ENCODE measurements at regions of chr19 and their contacts with region 1.

Region 1: GRCh38 chr19:45994989-45995714 is at the start of gene CCDC61:
- DNase-seq: peak; percentile 100
- H3K4me3 Mint-ChIP-seq: no peak within 1 kb of the TSS
- H3K27ac Mint-ChIP-seq: no peak within 1 kb of the TSS
- H3K4me1 Mint-ChIP-seq: peaks cover 33% of the 10 kb centered on the region
- H3K27me3 Mint-ChIP-seq: peaks cover 8% of the 10 kb centered on the region
- CTCF ChIP-seq: no peak
- total RNA-seq, gene CCDC61: 17.5 and 18.9 TPM in 2 replicates

Region 2: GRCh38 chr19:45862564-45863334 is 132.4 kb before region 1 on chr19 and contains the start of gene SYMPK:
- CTCF ChIA-PET with region 1: interaction called, 3 read pairs
- POLR2A ChIA-PET with region 1: interaction called, 13 read pairs
- intact Hi-C with region 1: no loop called
- DNase-seq: peak; percentile 99
- H3K4me3 Mint-ChIP-seq: peak within 1 kb of the TSS; percentile 90
- H3K27ac Mint-ChIP-seq: peak within 1 kb of the TSS; percentile 86
- H3K4me1 Mint-ChIP-seq: peaks cover 10% of the 10 kb centered on the region
- H3K27me3 Mint-ChIP-seq: peaks cover 50% of the 10 kb centered on the region
- CTCF ChIP-seq: no peak
- total RNA-seq, gene SYMPK: 77.4 and 86.2 TPM in 2 replicates

Region 3: DNA sequence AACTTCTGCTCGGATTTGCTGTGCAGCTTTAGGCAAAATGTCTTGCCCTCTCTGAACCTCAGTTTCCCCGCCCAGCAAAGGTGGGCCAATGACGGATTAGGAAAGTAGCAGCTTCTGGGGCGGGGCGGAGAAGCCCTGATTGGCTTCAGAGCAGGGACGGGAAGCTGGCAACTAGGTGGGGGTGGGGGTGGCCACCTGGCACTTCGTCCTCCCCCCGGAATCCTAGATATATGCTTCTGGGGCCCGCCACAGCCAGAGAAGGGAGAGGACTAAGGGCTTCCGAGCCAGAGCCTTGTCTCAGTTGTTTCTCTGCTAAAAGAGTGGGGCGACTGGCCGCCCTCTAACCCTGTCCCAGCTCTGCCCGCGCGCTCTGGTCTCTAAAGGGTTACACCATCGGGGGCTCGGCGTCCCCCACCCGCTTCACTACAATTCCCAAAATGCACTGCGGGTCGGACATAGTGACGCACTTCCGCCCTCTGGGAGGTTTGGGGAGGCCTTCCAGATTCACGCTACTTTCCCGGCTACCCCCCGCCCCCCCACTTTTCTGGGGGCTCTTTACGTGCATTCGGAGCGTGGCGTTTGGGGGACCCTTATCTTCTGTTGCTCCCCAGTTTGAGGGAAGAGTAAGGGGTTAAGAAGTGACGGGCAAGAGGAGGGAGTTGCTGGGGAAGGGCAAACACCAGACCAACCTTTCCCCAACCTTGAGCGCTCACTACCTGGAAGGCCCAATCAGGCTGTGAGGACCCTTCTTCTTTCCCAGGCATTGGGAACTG is 108.5 kb before region 1 on chr19:
- CTCF ChIA-PET with region 1: no interaction called
- POLR2A ChIA-PET with region 1: interaction called, 22 read pairs
- intact Hi-C with region 1: loop called (anchors 10 kb)
- DNase-seq: peak; percentile 97
- H3K4me3 Mint-ChIP-seq: peak overlapping the region; percentile 97
- H3K27ac Mint-ChIP-seq: peak overlapping the region; percentile 98
- H3K4me1 Mint-ChIP-seq: peaks cover 10% of the 10 kb centered on the region
- H3K27me3 Mint-ChIP-seq: no peaks in the 10 kb centered on the region
- CTCF ChIP-seq: no peak

Region 4: DNA sequence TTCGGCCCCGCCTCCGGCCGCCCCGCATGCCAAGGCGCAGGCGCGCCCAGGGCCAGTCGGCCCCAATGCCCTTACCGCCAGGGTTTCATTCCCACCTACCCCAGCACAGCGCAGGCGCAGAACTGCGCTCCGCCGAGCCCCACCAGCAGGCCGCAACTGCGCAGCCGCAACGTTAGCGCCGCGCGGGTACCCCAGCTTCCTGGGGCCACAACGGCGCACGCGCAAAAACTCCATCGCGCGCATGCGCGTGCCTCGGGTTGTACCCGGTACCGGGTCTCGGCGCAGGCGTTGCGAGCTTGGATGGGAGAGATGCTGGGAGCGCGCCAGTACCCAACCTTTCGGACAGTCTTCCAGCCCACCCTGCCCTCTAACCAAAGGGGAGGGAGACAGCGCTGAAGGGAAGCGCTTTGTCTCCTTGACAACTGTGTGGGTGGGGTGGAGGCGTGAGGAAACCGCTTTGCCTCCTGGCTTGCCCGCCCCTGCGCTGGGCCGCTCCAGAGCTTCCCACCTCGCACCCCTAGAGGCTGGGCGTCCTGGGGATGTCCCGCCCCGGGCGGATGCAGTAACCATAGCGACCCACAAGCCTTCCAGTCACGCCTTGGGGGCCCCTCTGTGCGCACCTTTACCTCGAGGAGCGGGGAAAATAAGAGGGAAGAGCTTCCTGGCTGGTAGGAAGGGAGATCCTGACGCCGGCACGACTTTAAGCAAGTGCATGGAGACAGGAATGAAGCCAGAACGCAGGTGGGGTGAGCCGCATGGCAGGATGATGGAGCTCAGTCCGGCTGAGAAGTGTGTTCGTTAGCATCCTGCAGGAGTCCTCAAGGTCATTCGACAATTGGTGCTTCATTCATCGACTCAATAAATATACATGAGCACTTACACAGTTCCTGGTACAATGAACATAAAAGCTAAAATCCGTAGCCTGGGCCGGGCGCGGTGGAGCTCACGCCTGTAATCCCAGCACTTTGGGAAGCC is 92.2 kb before region 1 on chr19:
- CTCF ChIA-PET with region 1: no interaction called
- POLR2A ChIA-PET with region 1: interaction called, 22 read pairs
- intact Hi-C with region 1: no loop called
- DNase-seq: peak; percentile 98
- H3K4me3 Mint-ChIP-seq: peak overlapping the region; percentile 98
- H3K27ac Mint-ChIP-seq: no peak overlapping the region
- H3K4me1 Mint-ChIP-seq: peaks cover 6% of the 10 kb centered on the region
- H3K27me3 Mint-ChIP-seq: no peaks in the 10 kb centered on the region
- CTCF ChIP-seq: no peak

Region 5: DNA sequence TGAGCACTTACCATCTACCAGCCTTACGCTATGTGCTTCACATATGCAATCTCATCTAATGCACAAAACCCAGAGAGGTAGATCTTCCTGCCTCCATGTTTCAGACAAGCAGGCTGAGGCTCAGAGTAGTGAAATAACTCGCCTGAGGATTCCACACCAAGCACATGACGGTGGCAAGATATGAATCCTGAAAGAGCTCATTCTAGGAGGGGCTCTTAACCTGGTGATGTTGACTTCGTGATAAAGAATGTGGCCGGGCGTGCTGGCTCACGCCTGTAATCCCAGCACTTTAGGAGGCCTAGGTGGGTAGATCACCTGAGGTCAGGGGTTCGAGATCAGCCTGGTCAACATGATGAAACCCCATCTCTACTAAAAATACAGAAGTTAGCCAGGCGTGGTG is 26.5 kb before region 1 on chr19:
- CTCF ChIA-PET with region 1: no interaction called
- POLR2A ChIA-PET with region 1: interaction called, 10 read pairs
- intact Hi-C with region 1: no loop called
- DNase-seq: no peak
- H3K4me3 Mint-ChIP-seq: no peak overlapping the region
- H3K27ac Mint-ChIP-seq: no peak overlapping the region
- H3K4me1 Mint-ChIP-seq: peaks cover 11% of the 10 kb centered on the region
- H3K27me3 Mint-ChIP-seq: peaks cover 83% of the 10 kb centered on the region
- CTCF ChIP-seq: no peak

Region 6: DNA sequence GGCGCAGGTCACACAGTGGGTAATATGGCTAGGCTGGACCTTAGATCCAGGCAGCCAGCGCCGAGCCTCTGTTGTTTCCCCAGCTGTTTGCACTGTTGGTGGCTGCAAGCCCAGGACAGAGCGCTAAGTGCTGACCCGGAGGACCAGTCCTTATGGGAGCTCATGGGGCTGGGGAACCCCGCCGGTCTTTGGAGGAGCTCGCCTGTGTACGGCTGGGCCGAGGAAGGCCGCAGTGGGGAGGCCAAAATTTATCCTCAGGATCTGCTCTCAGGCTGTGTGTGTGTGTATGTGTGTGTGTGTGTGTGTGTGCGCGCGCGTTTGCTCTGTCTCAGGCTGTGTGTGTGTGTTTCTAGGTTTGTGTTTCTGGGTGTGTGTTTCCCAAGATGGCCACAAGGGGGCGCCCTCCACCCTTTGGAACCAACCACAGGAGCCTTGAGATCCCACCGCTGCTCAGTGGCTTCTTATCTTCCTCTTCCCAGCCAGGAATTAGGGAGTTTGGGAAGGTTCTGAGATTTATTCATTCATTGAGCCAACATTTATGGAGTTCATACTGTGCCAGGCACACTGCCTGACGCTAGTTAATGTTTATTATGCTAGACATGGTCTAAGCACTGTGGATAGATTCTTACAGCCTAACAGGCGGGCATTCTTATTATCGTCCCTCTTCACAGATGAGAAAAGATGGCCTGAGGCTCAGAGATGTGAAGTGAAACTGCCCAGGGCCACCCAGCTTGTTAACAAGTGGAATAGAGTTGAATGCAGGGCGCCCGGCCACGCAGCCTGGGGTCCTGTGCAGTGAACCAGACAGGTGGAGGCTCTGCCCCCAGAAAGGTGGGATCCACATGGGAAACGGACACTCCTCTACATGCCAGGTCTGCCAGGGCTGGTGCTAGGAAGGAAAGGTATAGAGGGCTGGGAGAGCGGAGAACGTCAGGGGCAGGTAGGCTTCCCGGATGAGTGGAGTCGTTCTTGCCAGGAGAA is 14.7 kb after region 1 on chr19:
- CTCF ChIA-PET with region 1: interaction called, 11 read pairs
- POLR2A ChIA-PET with region 1: interaction called, 10 read pairs
- intact Hi-C with region 1: no loop called
- DNase-seq: peak; percentile 74
- H3K4me3 Mint-ChIP-seq: no peak overlapping the region
- H3K27ac Mint-ChIP-seq: no peak overlapping the region
- H3K4me1 Mint-ChIP-seq: peaks cover 8% of the 10 kb centered on the region
- H3K27me3 Mint-ChIP-seq: no peaks in the 10 kb centered on the region
- CTCF ChIP-seq: peak; percentile 73